Activated naive CD4-positive, alpha-beta T cell treated with anti-CD3 and anti-CD28 coated beads, Interleukin-2, amount 10 ng/mL, durations not matched to agents 7 days and 5 days (primary cell): ENCODE measurements at regions of chr12 and their contacts with region 1.

Region 1: DNA sequence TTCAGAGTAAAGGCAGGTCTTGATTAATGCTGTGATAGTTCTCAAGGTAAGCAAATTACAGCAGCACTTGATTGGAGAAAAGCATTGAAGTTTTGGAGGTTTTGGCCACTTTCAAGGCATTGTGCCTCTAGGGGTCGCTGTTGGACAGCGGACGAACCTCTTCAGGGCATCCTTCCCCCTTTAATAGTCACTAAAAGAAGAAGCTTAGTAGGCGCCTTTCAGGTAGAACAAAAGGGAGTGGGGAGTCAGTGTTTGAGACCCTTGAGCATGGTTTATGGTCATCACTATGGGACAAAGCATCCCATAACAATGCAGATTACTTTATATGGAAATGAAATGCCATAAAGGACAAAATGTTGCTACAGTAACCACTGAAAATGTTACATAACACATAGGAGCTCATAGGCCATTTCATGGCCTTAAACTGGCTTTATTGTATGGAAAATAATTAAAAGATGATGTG is 199.5 kb upstream of the DCN start:
- DNase-seq: peak; percentile 89
- H3K4me3 Mint-ChIP-seq: peak overlapping the region; percentile 67
- H3K27ac Mint-ChIP-seq: no peak overlapping the region
- H3K4me1 Mint-ChIP-seq: peaks cover 12% of the 10 kb centered on the region
- H3K27me3 Mint-ChIP-seq: no peaks in the 10 kb centered on the region

Region 2: GRCh38 chr12:91289906-91290305 is 92.2 kb before region 1 on chr12:
- CTCF ChIA-PET with region 1: no interaction called
- DNase-seq: no peak
- H3K4me3 Mint-ChIP-seq: no peak overlapping the region
- H3K27ac Mint-ChIP-seq: no peak overlapping the region
- H3K4me1 Mint-ChIP-seq: no peaks in the 10 kb centered on the region
- H3K27me3 Mint-ChIP-seq: no peaks in the 10 kb centered on the region

Region 3: DNA sequence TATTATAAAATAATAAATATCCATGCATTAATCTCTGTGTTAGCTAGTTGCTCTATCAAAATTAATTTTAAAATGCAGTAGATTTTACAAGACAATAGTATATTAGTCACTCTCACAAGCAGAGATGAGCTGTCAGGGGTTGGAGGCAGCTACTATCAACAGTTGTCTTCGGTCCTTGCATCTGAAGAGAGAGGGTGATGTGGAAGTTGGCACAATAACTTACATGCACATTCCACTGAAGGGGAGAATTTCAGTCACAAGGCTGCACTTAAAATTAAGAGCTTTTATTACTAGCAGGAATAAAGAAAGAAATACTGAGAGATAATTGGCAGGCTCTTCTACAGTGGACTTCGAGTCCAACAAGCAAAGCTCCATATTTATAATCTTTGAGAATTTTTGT is 32.6 kb before region 1 on chr12:
- CTCF ChIA-PET with region 1: no interaction called
- DNase-seq: no peak
- H3K4me3 Mint-ChIP-seq: no peak overlapping the region
- H3K27ac Mint-ChIP-seq: no peak overlapping the region
- H3K4me1 Mint-ChIP-seq: no peaks in the 10 kb centered on the region
- H3K27me3 Mint-ChIP-seq: no peaks in the 10 kb centered on the region

Region 4: GRCh38 chr12:91361864-91362263 is 20.2 kb before region 1 on chr12:
- CTCF ChIA-PET with region 1: interaction called, 14 read pairs
- DNase-seq: no peak
- H3K4me3 Mint-ChIP-seq: no peak overlapping the region
- H3K27ac Mint-ChIP-seq: no peak overlapping the region
- H3K4me1 Mint-ChIP-seq: peaks cover 2% of the 10 kb centered on the region
- H3K27me3 Mint-ChIP-seq: peaks cover 3% of the 10 kb centered on the region

Region 5: GRCh38 chr12:91413581-91414546 is 31.8 kb after region 1 on chr12:
- CTCF ChIA-PET with region 1: no interaction called
- DNase-seq: no peak
- H3K4me3 Mint-ChIP-seq: no peak overlapping the region
- H3K27ac Mint-ChIP-seq: no peak overlapping the region
- H3K4me1 Mint-ChIP-seq: no peaks in the 10 kb centered on the region
- H3K27me3 Mint-ChIP-seq: no peaks in the 10 kb centered on the region

Region 6: GRCh38 chr12:91467686-91468085 is 85.6 kb after region 1 on chr12:
- CTCF ChIA-PET with region 1: no interaction called
- DNase-seq: no peak
- H3K4me3 Mint-ChIP-seq: no peak overlapping the region
- H3K27ac Mint-ChIP-seq: no peak overlapping the region
- H3K4me1 Mint-ChIP-seq: no peaks in the 10 kb centered on the region
- H3K27me3 Mint-ChIP-seq: no peaks in the 10 kb centered on the region

Region 7: DNA sequence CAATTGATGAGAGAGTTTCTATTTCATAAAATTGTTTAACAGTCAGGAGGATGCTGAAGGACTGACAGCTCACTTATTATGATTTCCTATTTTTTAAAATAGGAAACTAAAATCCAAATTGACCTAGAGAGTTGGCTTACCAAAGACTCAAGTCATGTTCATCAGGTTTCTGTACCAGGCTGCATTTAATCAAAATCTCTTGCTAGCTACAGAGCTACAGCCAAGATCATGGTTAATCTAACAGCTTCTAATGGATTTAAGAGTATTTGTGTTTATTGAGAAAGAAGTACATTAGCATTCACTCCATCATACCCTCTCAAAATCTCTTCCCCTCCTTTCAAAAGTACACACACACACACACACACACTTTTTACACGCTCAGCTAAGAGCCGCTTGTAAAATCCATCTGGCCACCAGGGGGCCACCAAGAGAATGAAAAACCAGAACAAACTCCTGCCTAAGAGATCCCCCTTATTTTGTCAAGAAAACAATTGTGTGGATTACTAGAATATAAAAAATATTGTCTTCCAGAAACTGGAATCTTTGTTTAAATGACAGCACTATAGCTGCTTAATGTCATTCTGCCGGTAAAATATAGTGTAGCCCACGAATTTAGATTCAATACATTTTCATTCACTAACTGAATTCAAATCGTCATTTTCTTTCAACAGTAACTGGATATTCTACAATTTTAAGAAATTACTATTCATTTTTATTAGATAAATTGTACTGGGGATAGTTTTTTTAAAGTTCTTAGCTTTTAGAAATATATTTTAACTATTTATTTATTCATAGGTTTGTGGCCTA is 429.6 kb after region 1 on chr12:
- CTCF ChIA-PET with region 1: interaction called, 15 read pairs
- DNase-seq: peak; percentile 76
- H3K4me3 Mint-ChIP-seq: no peak overlapping the region
- H3K27ac Mint-ChIP-seq: no peak overlapping the region
- H3K4me1 Mint-ChIP-seq: peaks cover 10% of the 10 kb centered on the region
- H3K27me3 Mint-ChIP-seq: no peaks in the 10 kb centered on the region

Region 8: DNA sequence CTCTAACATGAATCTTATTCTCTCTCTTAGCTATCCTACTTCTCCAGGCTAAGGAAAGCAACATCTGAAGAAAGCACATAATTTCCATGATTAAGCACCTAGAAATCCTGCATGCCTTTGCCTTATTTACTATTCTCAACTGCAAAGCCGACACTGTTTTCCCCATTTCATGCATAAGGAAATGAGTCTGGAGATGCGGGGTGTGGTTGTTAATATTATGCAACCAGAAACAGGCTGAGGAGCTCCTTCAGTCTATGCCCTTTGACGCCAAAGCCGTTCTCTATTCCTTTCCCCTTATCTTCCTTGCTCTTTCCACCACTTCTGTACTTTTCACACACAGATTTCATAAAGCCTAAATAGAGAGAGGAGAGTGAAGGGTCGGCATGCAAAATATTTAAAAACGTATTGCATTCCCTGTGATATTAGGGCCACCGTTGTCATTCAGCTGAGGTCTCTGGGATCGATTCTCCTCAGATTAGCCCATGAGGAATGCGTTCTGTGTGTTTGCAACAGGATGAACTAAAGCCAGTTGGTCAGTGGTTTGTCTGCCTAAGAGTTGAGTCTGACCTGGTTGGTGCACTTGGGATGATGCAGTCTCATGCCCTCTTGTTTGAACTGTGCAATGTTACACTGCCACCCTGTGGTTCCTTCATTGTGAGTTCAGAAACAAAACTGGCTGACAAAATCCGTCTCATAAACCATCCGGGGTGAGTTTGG is 1267.6 kb after region 1 on chr12:
- CTCF ChIA-PET with region 1: interaction called, 25 read pairs
- DNase-seq: peak; percentile 66
- H3K4me3 Mint-ChIP-seq: no peak overlapping the region
- H3K27ac Mint-ChIP-seq: no peak overlapping the region
- H3K4me1 Mint-ChIP-seq: peaks cover 3% of the 10 kb centered on the region
- H3K27me3 Mint-ChIP-seq: no peaks in the 10 kb centered on the region